Left ventricle myocardium superior (tissue), 1 donor: ENCODE measurements at regions of chr4 and their contacts with region 1.

Region 1: GRCh38 chr4:168076989-168077725 is 15.2 kb upstream of the ANXA10 start:
- DNase-seq: peak; percentile 20
- ATAC-seq: no peak

Region 2: DNA sequence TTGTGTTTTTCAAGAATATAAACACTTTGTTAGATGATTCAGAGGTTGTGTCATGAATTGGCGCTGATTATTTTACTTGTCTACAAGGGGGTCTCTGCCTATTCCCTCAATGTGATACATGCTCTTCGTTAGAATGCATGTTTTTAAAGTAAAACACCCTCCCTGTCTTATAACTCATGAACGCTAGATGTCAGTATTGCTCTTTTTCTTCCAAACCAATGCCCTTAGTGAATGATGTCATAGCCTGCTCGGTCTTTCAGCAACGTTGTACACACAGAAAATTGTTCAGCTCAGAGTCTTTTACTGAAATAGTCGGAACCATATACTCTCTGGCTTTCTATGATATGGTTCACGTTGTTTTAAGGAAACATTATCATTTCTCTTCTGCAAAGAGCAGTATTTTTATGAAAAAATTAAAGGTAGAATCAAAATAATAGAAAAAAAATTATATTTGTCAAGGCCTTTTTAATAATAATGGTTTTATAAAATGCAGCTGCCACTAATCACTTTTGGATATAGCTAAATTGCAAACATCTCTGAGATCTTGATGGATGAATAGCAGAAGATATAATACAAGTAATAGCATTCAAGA is 1911.2 kb before region 1 on chr4:
- intact Hi-C with region 1: loop called (anchors 10 kb)
- DNase-seq: no peak
- ATAC-seq: peak; percentile 58

Region 3: GRCh38 chr4:167713756-167714155 is 363.4 kb before region 1 on chr4:
- intact Hi-C with region 1: no loop called
- DNase-seq: no peak
- ATAC-seq: no peak

Region 4: GRCh38 chr4:168221301-168221700 is 144.1 kb after region 1 on chr4:
- intact Hi-C with region 1: no loop called
- DNase-seq: no peak
- ATAC-seq: no peak